WTC11 (cell line): ENCODE measurements at regions of chr4 and their contacts with region 1.

Region 1: GRCh38 chr4:133146574-133147241 is 2.4 kb upstream of the PCDH10 start:
- DNase-seq: peak; percentile 77
- ATAC-seq: peak; percentile 31
- H3K4me3 Mint-ChIP-seq: peak overlapping the region; percentile 76
- H3K27ac Mint-ChIP-seq: peak overlapping the region; percentile 50; the same call in 1 of the 2 replicates
- H3K4me1 Mint-ChIP-seq: peaks cover 40% of the 10 kb centered on the region
- H3K27me3 Mint-ChIP-seq: peaks cover 56% of the 10 kb centered on the region
- CTCF ChIP-seq: peak; percentile 66

Region 2: GRCh38 chr4:132893787-132894186 is 252.9 kb before region 1 on chr4:
- CTCF ChIA-PET with region 1: no interaction called
- POLR2A ChIA-PET with region 1: no interaction called
- DNase-seq: no peak
- ATAC-seq: no peak
- H3K4me3 Mint-ChIP-seq: no peak overlapping the region
- H3K27ac Mint-ChIP-seq: no peak overlapping the region
- H3K4me1 Mint-ChIP-seq: no peaks in the 10 kb centered on the region
- H3K27me3 Mint-ChIP-seq: no peaks in the 10 kb centered on the region
- CTCF ChIP-seq: no peak

Region 3: GRCh38 chr4:133131829-133132485 is 14.8 kb before region 1 on chr4:
- CTCF ChIA-PET with region 1: interaction called, 17 read pairs
- POLR2A ChIA-PET with region 1: no interaction called
- DNase-seq: no peak
- ATAC-seq: peak; percentile 80
- H3K4me3 Mint-ChIP-seq: peak overlapping the region; percentile 42
- H3K27ac Mint-ChIP-seq: peak overlapping the region; percentile 88
- H3K4me1 Mint-ChIP-seq: peaks cover 57% of the 10 kb centered on the region
- H3K27me3 Mint-ChIP-seq: no peaks in the 10 kb centered on the region
- CTCF ChIP-seq: no peak

Region 4: DNA sequence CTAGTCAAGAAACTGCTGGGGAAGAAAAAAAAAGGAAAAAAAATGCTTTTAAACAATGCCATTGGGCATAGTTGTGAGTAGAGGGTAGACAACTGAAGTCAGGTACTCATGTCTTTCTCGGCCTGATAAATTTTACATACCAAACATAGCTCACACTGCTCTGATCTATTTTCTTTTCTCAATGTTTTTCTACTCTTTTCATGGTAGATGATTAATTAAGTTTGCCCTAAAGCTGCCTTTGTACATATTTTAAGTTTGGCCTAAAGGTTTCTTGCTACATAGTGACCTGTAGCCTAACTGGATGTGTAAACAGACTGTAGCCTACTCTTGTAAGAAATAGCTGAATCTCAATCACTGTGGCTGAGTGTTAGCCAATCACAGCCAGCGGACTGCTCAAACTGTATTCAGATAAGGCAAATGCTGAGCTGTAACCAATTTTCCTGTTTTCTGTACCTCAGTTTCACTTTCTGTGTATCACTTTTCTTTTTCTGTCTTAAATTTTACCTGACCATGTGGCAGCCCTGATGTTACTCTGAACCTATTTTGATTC is 123.4 kb after region 1 on chr4:
- CTCF ChIA-PET with region 1: interaction called, 12 read pairs
- POLR2A ChIA-PET with region 1: no interaction called
- DNase-seq: no peak
- ATAC-seq: peak; percentile 81
- H3K4me3 Mint-ChIP-seq: no peak overlapping the region
- H3K27ac Mint-ChIP-seq: peak overlapping the region; percentile 79
- H3K4me1 Mint-ChIP-seq: peaks cover 24% of the 10 kb centered on the region
- H3K27me3 Mint-ChIP-seq: no peaks in the 10 kb centered on the region
- CTCF ChIP-seq: no peak

Region 5: GRCh38 chr4:133472244-133472643 is 325.5 kb after region 1 on chr4:
- CTCF ChIA-PET with region 1: interaction called, 10 read pairs
- POLR2A ChIA-PET with region 1: no interaction called
- DNase-seq: no peak
- ATAC-seq: no peak
- H3K4me3 Mint-ChIP-seq: no peak overlapping the region
- H3K27ac Mint-ChIP-seq: no peak overlapping the region
- H3K4me1 Mint-ChIP-seq: peaks cover 40% of the 10 kb centered on the region
- H3K27me3 Mint-ChIP-seq: peaks cover 11% of the 10 kb centered on the region
- CTCF ChIP-seq: no peak

Region 6: DNA sequence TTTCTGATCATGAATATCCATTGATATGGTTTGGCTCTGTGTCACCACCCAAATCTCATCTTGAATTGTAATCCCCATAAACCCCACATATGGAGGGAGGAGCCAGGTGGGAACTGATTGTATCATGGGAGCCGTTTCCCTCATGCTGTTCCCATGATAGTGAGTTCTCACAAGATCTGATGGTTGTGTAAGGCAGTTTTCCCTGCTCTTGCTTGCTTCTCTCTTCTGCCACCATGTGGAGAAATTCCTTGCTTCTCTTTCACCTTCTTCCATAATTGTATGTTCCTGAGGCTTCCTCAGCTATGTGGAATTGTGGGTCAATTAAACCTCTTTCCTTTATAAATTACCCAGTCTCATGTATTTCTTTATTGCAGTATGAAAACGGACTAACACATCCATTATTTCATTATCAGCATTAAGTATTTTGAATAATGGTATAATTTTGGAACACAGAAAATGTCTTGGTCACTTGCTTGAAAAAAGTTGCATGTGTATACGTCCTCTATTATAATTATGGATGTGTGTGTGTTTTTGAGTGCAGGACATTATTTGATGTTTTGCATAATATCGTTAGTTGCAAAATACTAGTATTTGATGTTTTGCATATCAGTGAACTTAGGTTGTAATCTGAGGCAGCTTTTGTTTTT is 337.0 kb after region 1 on chr4:
- CTCF ChIA-PET with region 1: interaction called, 11 read pairs
- POLR2A ChIA-PET with region 1: no interaction called
- DNase-seq: no peak
- ATAC-seq: peak; percentile 80
- H3K4me3 Mint-ChIP-seq: no peak overlapping the region
- H3K27ac Mint-ChIP-seq: no peak overlapping the region
- H3K4me1 Mint-ChIP-seq: peaks cover 12% of the 10 kb centered on the region; the same call in 1 of the 2 replicates
- H3K27me3 Mint-ChIP-seq: no peaks in the 10 kb centered on the region
- CTCF ChIP-seq: no peak